ENCODE measurements at regions of chr9 and their contacts with region 1.

Region 1: DNA sequence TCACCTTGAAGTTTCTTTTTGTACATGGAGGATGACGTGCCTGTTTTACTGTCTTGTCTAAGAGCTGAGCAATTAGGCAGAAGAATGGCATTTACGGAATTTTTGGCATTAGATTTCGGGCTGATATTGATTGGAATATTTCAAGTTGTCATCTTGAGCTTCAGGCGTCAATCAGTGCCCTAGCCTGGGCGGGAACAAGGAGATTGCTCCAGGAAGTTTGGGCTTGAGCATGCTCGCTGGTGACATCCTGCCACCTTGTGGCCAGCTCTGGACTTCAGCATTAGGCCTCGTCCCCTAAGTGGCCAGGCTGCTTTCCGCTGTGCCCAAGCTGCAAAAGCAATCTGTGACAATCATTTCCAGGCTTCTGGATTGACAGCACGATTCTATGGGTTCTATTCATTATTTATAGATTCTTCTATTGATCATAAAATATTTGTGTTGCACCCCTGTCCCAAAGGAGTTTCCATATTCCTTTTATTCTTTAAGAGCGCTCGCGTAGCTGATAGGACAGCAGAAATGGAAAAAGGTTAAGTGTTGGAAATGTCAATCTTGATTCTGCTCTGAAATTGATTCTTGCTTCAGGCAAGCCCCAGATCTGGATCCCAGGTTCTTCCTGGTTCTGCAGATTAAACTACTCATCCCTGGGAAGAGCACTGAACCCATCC is 79.3 kb downstream of the SLC28A3 start:
- DNase-seq: peak; percentile 82
- H3K4me3 Mint-ChIP-seq: no peak overlapping the region
- H3K27ac Mint-ChIP-seq: no peak overlapping the region
- H3K4me1 Mint-ChIP-seq: peaks cover 11% of the 10 kb centered on the region
- H3K27me3 Mint-ChIP-seq: no peaks in the 10 kb centered on the region
- CTCF ChIP-seq: peak; percentile 79

Region 2: GRCh38 chr9:83937911-83938323 is 323.3 kb before region 1 on chr9:
- CTCF ChIA-PET with region 1: interaction called, 64 read pairs
- POLR2A ChIA-PET with region 1: interaction called, 10 read pairs
- intact Hi-C with region 1: loop called (anchors 1 kb)
- DNase-seq: peak; percentile 83
- H3K4me3 Mint-ChIP-seq: no peak overlapping the region
- H3K27ac Mint-ChIP-seq: no peak overlapping the region
- H3K4me1 Mint-ChIP-seq: peaks cover 41% of the 10 kb centered on the region
- H3K27me3 Mint-ChIP-seq: no peaks in the 10 kb centered on the region
- CTCF ChIP-seq: peak; percentile 67

Region 3: DNA sequence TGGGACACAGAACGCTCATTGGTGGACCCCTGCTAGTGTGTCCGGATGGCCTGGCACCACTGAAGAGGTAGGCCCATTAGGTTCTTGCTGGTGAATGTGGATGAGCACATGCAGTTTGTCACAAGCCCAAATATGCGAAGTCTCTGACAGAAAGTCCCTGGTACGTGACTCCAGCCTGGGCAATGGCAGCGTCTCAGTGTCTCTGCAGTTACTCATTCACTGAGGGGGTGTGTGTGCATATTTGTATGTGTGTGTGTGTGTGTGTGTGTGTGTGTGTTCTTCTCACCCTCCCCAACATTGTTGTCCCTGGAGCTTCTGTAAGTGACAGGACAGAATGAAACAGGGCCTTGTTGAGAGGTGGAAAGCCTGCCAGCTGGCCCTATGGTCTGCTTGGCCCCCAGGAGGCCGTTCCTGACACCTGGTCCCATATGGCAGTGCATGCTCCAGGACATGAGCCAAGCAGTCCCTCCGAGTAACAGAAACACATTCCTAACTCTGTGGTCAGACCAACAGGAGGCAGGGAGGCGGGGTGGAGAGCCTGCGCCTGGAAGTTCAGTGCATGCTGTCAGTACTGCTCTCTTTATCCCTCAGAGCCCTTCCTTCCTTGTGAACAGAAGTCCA is 90.6 kb before region 1 on chr9:
- CTCF ChIA-PET with region 1: interaction called, 20 read pairs
- POLR2A ChIA-PET with region 1: no interaction called
- intact Hi-C with region 1: no loop called
- DNase-seq: peak; percentile 79
- H3K4me3 Mint-ChIP-seq: no peak overlapping the region
- H3K27ac Mint-ChIP-seq: peak overlapping the region; percentile 69
- H3K4me1 Mint-ChIP-seq: peaks cover 21% of the 10 kb centered on the region
- H3K27me3 Mint-ChIP-seq: no peaks in the 10 kb centered on the region
- CTCF ChIP-seq: peak; percentile 17

Region 4: DNA sequence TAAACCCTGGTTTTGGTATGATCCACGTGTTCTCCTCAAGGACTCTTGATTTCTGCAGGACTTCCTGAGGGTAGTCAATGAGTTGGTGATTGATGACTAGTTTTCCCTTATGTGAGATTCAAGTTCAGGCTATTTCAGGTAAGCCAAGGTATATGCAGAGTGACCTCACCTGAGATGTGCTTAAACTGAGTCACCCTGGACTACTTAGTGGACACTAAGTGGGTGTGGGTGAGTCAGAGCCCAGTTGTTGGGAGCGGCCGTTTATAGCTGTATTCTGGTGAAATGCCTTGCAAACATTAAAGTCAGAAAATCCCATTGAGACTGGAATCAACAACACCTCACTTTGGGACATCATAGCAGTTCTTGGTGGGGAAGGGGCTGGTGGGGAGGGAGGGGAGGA is 16.4 kb after region 1 on chr9:
- CTCF ChIA-PET with region 1: interaction called, 11 read pairs
- POLR2A ChIA-PET with region 1: no interaction called
- intact Hi-C with region 1: no loop called
- DNase-seq: peak; percentile 75
- H3K4me3 Mint-ChIP-seq: no peak overlapping the region
- H3K27ac Mint-ChIP-seq: no peak overlapping the region
- H3K4me1 Mint-ChIP-seq: peaks cover 13% of the 10 kb centered on the region
- H3K27me3 Mint-ChIP-seq: no peaks in the 10 kb centered on the region
- CTCF ChIP-seq: no peak

Region 5: GRCh38 chr9:84304166-84304565 is 43.0 kb after region 1 on chr9:
- CTCF ChIA-PET with region 1: interaction called, 14 read pairs
- POLR2A ChIA-PET with region 1: no interaction called
- intact Hi-C with region 1: no loop called
- DNase-seq: no peak
- H3K4me3 Mint-ChIP-seq: no peak overlapping the region
- H3K27ac Mint-ChIP-seq: no peak overlapping the region
- H3K4me1 Mint-ChIP-seq: peaks cover 24% of the 10 kb centered on the region
- H3K27me3 Mint-ChIP-seq: no peaks in the 10 kb centered on the region
- CTCF ChIP-seq: no peak

Region 6: GRCh38 chr9:84583866-84584265 is 322.7 kb after region 1 on chr9:
- CTCF ChIA-PET with region 1: no interaction called
- POLR2A ChIA-PET with region 1: no interaction called
- intact Hi-C with region 1: no loop called
- DNase-seq: no peak
- H3K4me3 Mint-ChIP-seq: no peak overlapping the region
- H3K27ac Mint-ChIP-seq: no peak overlapping the region
- H3K4me1 Mint-ChIP-seq: peaks cover 5% of the 10 kb centered on the region
- H3K27me3 Mint-ChIP-seq: no peaks in the 10 kb centered on the region
- CTCF ChIP-seq: no peak